ENCODE measurements at regions of chr5 and their contacts with region 1.

Region 1: GRCh38 chr5:136620016-136620419 is 254.7 kb upstream of the TRPC7 start:
- DNase-seq: peak; percentile 91
- H3K4me3 ChIP-seq: no peak overlapping the region
- H3K27ac ChIP-seq: peak overlapping the region; percentile 96
- H3K4me1 ChIP-seq: peaks cover 59% of the 10 kb centered on the region
- H3K27me3 ChIP-seq: no peaks in the 10 kb centered on the region
- CTCF ChIP-seq: no peak
- POLR2A ChIP-seq: peak; percentile 64

Region 2: DNA sequence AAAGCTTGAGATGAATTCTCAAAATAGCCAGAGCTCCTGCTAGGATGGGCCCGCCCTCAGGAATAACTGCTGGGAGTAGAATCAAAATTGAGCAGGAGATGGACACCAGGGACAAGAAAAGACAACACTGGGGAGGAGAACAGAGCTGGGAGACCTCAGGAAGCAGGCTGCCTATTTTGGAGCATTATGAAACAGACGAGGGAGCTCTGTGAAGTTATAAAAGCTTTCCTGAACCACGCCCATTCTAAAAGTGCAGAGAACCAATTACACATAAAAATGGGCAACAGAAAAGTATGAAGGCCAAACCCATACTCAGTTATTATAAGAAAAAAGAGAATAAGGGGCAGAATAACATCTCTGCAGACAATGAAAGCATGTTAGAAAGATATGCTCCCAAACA is 40.8 kb before region 1 on chr5:
- CTCF ChIA-PET with region 1: no interaction called
- POLR2A ChIA-PET with region 1: no interaction called
- dilution Hi-C with region 1: no loop called
- intact Hi-C with region 1: no loop called
- DNase-seq: no peak
- H3K4me3 ChIP-seq: no peak overlapping the region
- H3K27ac ChIP-seq: no peak overlapping the region
- H3K4me1 ChIP-seq: no peaks in the 10 kb centered on the region
- H3K27me3 ChIP-seq: no peaks in the 10 kb centered on the region
- CTCF ChIP-seq: no peak
- POLR2A ChIP-seq: no peak

Region 3: GRCh38 chr5:136655429-136655828 is 35.4 kb after region 1 on chr5:
- CTCF ChIA-PET with region 1: interaction called, 7 read pairs
- POLR2A ChIA-PET with region 1: no interaction called
- dilution Hi-C with region 1: no loop called
- intact Hi-C with region 1: loop called (anchors 1 kb)
- DNase-seq: peak; percentile 84
- H3K4me3 ChIP-seq: no peak overlapping the region
- H3K27ac ChIP-seq: peak overlapping the region; percentile 67
- H3K4me1 ChIP-seq: peaks cover 25% of the 10 kb centered on the region
- H3K27me3 ChIP-seq: no peaks in the 10 kb centered on the region
- CTCF ChIP-seq: no peak
- POLR2A ChIP-seq: peak; percentile 38

Region 4: DNA sequence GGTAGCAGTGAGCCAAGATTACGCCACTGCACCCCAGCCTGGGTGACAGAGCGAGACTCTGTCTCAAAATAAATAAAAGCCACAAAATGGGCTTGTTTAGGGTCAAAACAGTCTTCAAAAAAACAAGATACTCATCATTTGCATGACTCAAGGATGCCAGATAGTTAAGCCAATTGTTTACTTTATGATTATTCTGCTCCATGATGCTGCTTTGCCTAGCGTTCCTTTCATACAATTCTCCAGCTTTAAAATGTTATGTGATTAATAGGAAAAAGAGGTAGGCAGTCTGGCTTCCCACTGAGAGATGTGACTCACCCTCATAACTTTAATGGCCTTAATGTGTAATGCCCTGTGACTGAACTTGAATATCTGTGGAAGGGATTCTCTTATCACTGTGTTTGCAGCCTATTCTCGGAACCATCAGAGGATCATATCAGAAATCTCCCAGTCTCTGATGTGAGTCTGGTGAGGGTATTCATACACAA is 109.9 kb after region 1 on chr5:
- CTCF ChIA-PET with region 1: no interaction called
- POLR2A ChIA-PET with region 1: no interaction called
- dilution Hi-C with region 1: no loop called
- intact Hi-C with region 1: loop called (anchors 2 kb)
- DNase-seq: peak; percentile 80
- H3K4me3 ChIP-seq: no peak overlapping the region
- H3K27ac ChIP-seq: peak overlapping the region; percentile 43
- H3K4me1 ChIP-seq: peaks cover 13% of the 10 kb centered on the region
- H3K27me3 ChIP-seq: peaks cover 0 to 2% of the 10 kb centered on the region in 2 experiments
- CTCF ChIP-seq: no peak
- POLR2A ChIP-seq: no peak

Measured in endothelial cell of umbilical vein (primary cell).